Activated CD8-positive, alpha-beta T cell treated with anti-CD3 and anti-CD28 coated beads, Interleukin-2, amount 10 ng/mL, durations not matched to agents 7 days and 5 days (primary cell): ENCODE measurements at regions of chr22 and their contacts with region 1.

Region 1: DNA sequence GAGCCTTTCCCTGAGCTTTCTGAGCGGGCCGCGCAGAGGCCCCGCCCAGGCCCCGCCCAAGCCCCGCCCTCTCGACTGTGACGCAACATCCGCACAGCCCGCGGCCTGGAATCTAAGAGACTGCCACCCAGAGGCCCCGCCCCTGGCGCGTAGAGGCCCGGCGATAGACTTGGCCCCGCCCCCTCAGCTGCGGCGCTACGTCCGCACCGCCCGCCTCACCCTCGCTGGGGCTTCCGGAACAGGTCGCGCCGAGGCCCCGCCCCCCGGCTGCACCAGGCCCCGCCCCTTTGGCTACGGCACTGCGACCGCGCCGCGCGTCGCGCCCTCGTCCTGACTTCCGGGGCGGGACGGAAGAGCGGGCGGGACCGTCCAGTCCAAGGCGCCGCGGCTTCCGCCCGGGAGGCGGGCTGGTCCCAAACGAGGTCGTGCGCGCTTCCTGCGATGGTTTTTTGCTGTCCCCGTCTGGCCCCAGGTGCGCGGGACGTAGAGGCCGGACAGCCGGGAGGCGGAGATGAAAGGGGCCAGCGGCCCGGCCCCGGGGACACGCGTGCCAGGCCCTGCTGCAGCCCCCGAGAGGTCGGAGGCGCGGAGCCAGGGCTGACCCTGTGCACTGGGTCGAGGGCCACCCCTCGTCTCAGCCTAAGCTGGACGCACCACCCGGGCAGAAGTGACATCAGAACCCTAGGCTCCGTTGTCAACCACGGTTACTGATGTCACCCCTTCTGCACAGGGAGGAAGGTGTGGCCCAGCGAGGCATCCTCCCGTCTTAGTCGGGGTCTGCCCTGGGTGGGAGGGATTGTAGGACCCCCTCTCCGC is 59.0 kb upstream of the WNT7B start:
- DNase-seq: peak; percentile 100
- ATAC-seq: peak; percentile 95
- H3K4me3 Mint-ChIP-seq: peak overlapping the region; percentile 81
- H3K27ac Mint-ChIP-seq: peak overlapping the region; percentile 95
- H3K4me1 Mint-ChIP-seq: peaks cover 21% of the 10 kb centered on the region
- H3K27me3 Mint-ChIP-seq: no peaks in the 10 kb centered on the region

Region 2: DNA sequence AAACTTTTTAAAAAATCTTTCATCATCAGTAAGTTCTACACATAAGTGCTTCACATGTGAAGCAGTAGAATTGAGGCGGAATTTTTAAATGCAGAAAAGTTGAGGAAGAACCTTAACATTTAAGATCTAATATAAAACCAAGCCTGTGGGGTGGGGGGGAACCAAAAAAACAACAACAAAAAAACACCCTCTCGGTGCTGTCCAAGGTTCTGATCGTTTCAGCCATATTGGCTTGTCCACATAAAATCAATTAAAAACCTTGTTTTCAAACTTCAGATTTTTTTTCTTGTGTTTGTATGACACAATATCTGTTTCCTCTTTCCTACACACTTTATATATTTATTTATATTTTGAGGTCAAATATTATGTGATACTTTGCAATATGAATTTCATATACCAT is 189.0 kb before region 1 on chr22:
- CTCF ChIA-PET with region 1: no interaction called
- POLR2A ChIA-PET with region 1: no interaction called
- DNase-seq: peak; percentile 29
- ATAC-seq: no peak
- H3K4me3 Mint-ChIP-seq: no peak overlapping the region
- H3K27ac Mint-ChIP-seq: no peak overlapping the region
- H3K4me1 Mint-ChIP-seq: peaks cover 6% of the 10 kb centered on the region
- H3K27me3 Mint-ChIP-seq: no peaks in the 10 kb centered on the region

Region 3: GRCh38 chr22:46013460-46014416 is 22.2 kb before region 1 on chr22:
- CTCF ChIA-PET with region 1: interaction called, 129 read pairs
- POLR2A ChIA-PET with region 1: interaction called, 22 read pairs
- DNase-seq: peak; percentile 80
- ATAC-seq: peak; percentile 96
- H3K4me3 Mint-ChIP-seq: peak overlapping the region; percentile 81
- H3K27ac Mint-ChIP-seq: peak overlapping the region; percentile 79
- H3K4me1 Mint-ChIP-seq: peaks cover 12% of the 10 kb centered on the region
- H3K27me3 Mint-ChIP-seq: peaks cover 3% of the 10 kb centered on the region

Region 4: DNA sequence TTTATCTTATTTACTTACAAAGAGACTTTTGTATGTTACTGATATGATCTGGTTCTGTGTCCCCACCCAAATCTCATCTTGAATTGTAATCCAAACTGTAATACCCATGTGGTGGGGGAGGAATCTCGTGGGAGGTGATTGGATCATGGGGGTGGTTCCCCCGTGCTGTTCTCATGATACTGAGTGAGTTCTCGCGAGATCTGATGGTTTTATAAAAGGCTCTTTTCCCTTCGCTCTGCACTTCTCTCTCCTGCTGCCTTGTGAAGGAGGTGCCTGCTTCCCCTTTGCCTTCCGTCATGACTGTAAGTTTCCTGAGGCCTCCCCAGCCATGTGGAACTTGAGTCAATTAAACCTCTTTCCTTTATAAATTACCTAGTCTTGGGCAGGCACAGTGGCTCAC is 16.6 kb before region 1 on chr22:
- CTCF ChIA-PET with region 1: interaction called, 36 read pairs
- POLR2A ChIA-PET with region 1: interaction called, 22 read pairs
- DNase-seq: no peak
- ATAC-seq: no peak
- H3K4me3 Mint-ChIP-seq: no peak overlapping the region
- H3K27ac Mint-ChIP-seq: no peak overlapping the region
- H3K4me1 Mint-ChIP-seq: peaks cover 3% of the 10 kb centered on the region
- H3K27me3 Mint-ChIP-seq: peaks cover 11% of the 10 kb centered on the region

Region 5: GRCh38 chr22:46057762-46058420 is 21.9 kb after region 1 on chr22:
- CTCF ChIA-PET with region 1: interaction called, 6 read pairs
- POLR2A ChIA-PET with region 1: interaction called, 45 read pairs
- DNase-seq: peak; percentile 55
- ATAC-seq: peak; percentile 77
- H3K4me3 Mint-ChIP-seq: peak overlapping the region; percentile 54
- H3K27ac Mint-ChIP-seq: peak overlapping the region; percentile 82
- H3K4me1 Mint-ChIP-seq: peaks cover 45% of the 10 kb centered on the region
- H3K27me3 Mint-ChIP-seq: no peaks in the 10 kb centered on the region